GM12878 (cell line): ENCODE measurements at regions of chr10 and their contacts with region 1.

Region 1: DNA sequence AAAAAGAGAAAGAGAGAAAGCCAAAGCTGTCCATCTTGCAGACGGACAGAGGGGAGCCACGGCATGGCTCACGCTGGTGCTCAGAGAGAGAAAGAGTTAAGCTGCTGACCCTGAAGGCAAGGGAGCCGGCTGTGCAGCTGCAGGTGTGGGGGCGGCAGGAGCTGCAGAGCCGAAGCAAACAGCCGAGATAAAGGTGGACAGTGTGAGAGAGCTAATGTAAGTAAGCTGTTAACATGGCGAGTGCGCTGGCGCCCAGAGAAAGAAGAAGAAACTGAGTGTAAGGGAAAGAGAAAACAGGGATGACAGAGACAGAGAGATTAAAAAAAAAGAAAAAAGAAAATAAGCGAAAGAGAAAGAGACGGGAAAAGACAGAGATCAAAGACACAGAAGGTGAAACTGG is 18.2 kb downstream of the COL17A1 start:
- DNase-seq: no peak
- ATAC-seq: no peak
- H3K4me3 ChIP-seq: no peak overlapping the region
- H3K27ac ChIP-seq: no peak overlapping the region
- H3K4me1 ChIP-seq: no peaks in the 10 kb centered on the region
- H3K27me3 ChIP-seq: no peaks in the 10 kb centered on the region; a peak in 1 of 4 replicates
- CTCF ChIP-seq: no peak
- EP300 ChIP-seq: no peak
- POLR2A ChIP-seq: no peak
- RAD21 ChIP-seq: no peak

Region 2: DNA sequence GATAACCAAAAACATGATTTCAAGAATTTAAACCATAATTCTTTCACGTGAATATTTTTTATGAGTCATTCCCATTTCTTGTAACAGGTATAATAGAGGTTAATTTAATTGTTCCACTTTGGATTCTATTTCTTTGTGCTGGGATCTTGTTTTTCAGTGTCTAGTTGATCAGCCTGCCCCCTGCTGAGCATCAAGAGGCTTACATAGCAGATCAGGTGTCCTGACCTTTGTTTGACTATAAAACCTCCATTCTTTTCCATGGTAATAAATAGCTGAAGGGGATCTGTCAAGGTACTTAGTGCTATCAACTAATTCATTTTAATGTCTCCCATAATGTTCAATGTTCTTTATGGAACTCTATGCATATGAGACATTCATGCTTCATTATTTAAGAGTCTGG is 13.2 kb after region 1 on chr10:
- CTCF ChIA-PET with region 1: interaction called, 4 read pairs
- POLR2A ChIA-PET with region 1: no interaction called
- RAD21 ChIA-PET with region 1: no interaction called
- SMC1A ChIA-PET with region 1: interaction called, 12 read pairs
- in situ Hi-C with region 1: no loop called
- intact Hi-C with region 1: no loop called
- DNase-seq: no peak
- ATAC-seq: peak; percentile 69
- H3K4me3 ChIP-seq: no peak overlapping the region
- H3K27ac ChIP-seq: no peak overlapping the region
- H3K4me1 ChIP-seq: no peaks in the 10 kb centered on the region
- H3K27me3 ChIP-seq: no peaks in the 10 kb centered on the region
- CTCF ChIP-seq: peak; percentile 47 to 53 (median 52); a peak in 5 of 6 replicates
- EP300 ChIP-seq: no peak
- POLR2A ChIP-seq: no peak
- RAD21 ChIP-seq: peak; percentile 46